ENCODE measurements at regions of chr7 and their contacts with region 1.

Region 1: DNA sequence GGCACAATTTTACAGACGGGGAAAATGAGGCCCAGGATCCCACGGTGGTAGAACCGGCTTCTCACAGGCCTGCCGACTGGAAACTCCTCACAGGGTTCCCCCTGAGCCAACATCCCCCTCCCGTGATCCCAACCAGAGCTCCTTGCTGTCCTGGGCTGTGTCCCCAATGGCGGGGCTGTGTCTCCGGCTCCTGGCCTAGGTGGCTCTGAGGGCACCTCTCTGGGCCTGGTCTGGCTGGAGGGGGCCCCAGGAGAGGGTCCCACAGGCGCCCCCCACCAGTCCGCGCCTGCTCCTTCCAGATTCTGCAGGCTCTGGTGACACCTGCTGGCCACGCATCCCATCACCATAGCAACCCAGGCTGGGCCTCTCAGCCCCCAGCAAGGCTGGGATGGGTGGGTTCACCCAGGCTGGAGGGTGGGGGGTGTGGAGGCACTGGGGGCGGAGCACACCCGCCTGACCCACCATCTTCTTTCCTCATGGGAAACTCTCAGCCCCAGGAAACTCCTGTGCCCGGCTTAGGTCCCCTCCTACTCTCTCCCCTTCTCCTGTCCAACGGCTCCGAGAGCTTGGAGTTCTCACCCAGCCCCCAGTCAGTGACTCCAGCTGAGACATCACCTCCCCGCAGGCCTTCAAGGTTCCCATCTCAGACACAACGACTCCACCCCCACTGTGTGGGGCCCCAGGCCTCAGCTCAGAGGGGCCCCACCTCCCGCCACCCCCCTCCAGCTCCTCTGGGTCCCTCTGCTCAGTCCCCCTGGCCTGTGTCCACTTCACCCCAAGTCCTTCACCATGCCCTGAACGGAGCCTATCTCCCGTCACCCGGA is 27.1 kb upstream of the TNRC18 start:
- DNase-seq: peak in 1 of 2 experiments; percentile 70
- H3K4me3 ChIP-seq: no peak overlapping the region
- H3K4me1 ChIP-seq: no peaks in the 10 kb centered on the region
- H3K27me3 ChIP-seq: no peaks in the 10 kb centered on the region

Region 2: GRCh38 chr7:5231811-5232484 is 218.8 kb before region 1 on chr7:
- in situ Hi-C with region 1: loop called (anchors 25 kb)
- DNase-seq: no peak
- H3K4me3 ChIP-seq: no peak overlapping the region
- H3K4me1 ChIP-seq: no peaks in the 10 kb centered on the region
- H3K27me3 ChIP-seq: no peaks in the 10 kb centered on the region

Region 3: DNA sequence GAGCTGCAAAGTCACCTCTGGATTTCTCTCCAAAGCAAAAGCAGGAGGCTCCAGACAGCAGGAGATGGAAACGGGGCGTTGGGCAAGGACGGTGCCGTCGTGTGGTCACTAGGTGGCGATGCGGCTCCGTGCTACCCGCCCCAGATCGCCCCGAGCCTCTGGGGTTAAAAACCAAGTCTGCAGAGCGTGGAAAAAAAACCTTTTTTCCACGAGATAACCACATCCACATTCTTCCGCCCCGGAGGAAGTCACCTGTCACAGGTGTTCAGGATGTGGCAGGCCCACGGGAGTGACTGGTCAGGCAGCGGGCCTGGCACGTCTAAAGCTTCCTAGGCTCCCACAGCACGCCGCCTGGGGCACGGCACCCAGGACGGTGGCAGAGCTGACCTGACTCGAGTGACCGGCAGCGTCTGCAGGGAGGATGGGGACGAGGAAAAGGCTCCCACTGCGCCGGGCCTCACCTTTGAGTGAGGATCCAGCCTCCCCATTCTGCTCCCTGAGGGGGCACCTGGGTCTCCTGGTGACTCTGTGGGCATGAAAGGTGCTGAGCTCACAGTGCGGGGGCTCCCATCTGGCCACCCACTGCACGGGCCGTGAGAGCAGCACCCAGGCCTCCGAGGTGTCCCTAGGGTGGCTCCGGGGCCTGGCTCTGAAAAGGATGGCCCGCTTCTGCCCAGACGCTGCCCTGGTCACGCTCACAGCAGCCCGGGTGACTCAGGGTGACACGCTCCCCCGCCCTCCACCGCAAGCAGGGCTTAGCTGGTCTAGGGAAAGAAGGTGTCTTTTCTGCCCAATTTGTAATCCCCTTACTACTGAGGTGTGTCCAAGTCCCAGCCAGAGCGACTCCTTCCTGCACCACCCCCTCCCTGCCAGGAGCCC is 44.2 kb after region 1 on chr7:
- in situ Hi-C with region 1: no loop called
- DNase-seq: peak; percentile 72 to 88
- H3K4me3 ChIP-seq: no peak overlapping the region
- H3K4me1 ChIP-seq: no peaks in the 10 kb centered on the region
- H3K27me3 ChIP-seq: no peaks in the 10 kb centered on the region

Measured in HAP-1 (cell line).